MCF 10A (cell line): ENCODE measurements at regions of chr7 and their contacts with region 1.

Region 1: DNA sequence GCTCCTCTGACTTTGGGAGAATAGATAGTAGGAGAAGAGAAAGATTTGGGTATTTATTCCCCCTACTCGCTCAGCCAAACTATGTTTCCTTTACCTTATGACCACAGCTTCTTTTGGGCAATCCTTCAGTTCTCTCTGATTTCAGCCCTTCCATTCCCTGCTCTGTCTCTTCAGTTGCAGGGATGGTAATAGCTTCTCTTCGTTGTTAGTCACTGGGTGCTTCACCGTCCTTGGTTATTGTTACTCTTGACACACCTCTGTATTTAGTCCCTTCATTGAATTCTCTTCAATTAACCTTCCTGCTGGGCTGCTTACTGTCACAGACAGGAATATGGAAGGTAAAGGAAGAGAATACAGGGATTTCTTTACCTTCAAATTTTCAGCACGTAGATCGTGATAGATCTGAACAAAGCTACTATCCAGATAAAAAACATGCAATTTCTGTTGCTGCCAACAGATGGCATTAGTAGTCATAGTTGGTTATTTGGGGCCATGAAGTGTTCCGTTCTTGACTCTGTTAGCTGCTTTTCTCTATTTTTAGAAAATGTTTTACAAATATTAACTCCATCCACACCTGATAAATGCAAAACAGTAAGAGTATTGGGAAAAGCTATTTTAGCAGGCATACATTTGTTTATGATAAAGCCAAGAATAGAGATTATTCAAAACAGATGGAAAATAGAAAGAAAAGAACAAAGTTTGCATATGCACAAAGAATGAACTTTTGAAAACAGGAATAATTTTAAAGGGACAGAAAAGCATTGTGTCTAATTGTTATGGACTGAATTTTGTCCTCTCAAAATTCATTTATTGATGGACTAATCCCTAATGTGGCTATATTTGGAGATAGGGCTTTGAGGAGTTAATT is 14.0 kb upstream of the PTTG1IP2 start:
- DNase-seq: peak; percentile 71
- H3K4me3 Mint-ChIP-seq: peak overlapping the region; percentile 63
- H3K27ac Mint-ChIP-seq: peak overlapping the region; percentile 24
- H3K4me1 Mint-ChIP-seq: peaks cover 8% of the 10 kb centered on the region
- H3K27me3 Mint-ChIP-seq: no peaks in the 10 kb centered on the region
- CTCF ChIP-seq: peak; percentile 62

Region 2: DNA sequence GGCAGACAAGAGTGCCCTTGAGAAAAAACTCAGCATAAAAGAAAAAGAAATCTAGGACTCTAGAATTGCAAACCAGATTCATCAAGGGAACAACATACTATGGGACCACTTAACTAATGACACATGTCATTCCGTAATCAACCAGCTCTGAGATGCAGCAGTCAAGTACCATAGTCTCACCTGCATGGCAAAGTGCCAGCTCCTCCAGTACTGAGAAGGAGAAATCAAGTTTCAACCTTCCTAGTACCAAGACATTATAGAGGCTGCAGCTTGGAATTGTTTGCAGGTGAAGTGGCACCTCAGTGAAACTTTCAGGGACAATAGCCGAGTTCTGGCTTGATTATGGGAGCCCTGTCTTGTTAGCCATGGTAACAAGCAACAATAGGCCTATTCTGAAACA is 289.7 kb before region 1 on chr7:
- CTCF ChIA-PET with region 1: no interaction called
- POLR2A ChIA-PET with region 1: no interaction called
- intact Hi-C with region 1: no loop called
- DNase-seq: no peak
- H3K4me3 Mint-ChIP-seq: no peak overlapping the region
- H3K27ac Mint-ChIP-seq: no peak overlapping the region
- H3K4me1 Mint-ChIP-seq: no peaks in the 10 kb centered on the region
- H3K27me3 Mint-ChIP-seq: no peaks in the 10 kb centered on the region
- CTCF ChIP-seq: no peak

Region 3: GRCh38 chr7:90216080-90216674 is 239.2 kb before region 1 on chr7:
- CTCF ChIA-PET with region 1: no interaction called
- POLR2A ChIA-PET with region 1: no interaction called
- intact Hi-C with region 1: no loop called
- DNase-seq: peak; percentile 77
- H3K4me3 Mint-ChIP-seq: no peak overlapping the region
- H3K27ac Mint-ChIP-seq: no peak overlapping the region
- H3K4me1 Mint-ChIP-seq: peaks cover 4% of the 10 kb centered on the region
- H3K27me3 Mint-ChIP-seq: peaks cover 17% of the 10 kb centered on the region
- CTCF ChIP-seq: no peak

Region 4: DNA sequence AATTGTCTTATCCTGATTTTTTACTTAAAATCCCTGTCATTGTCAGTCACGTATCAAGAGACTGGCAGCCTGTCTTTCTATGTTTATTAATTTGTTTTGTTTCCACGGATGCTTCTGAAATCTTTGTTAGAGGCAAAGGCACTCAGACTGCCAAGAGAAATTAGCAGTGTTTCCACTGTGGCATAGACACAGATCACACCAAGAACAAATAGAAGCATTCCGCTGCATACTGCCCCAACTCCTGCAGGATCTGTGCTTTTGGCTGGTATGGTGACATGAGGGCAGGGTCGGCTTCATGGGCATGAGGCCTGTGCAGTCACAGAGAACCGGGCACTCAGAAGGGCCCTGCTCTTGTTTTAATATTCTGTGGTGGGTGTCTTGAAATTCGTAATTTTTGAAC is 33.7 kb before region 1 on chr7:
- CTCF ChIA-PET with region 1: no interaction called
- POLR2A ChIA-PET with region 1: no interaction called
- intact Hi-C with region 1: no loop called
- DNase-seq: no peak
- H3K4me3 Mint-ChIP-seq: no peak overlapping the region
- H3K27ac Mint-ChIP-seq: no peak overlapping the region
- H3K4me1 Mint-ChIP-seq: peaks cover 7% of the 10 kb centered on the region
- H3K27me3 Mint-ChIP-seq: no peaks in the 10 kb centered on the region
- CTCF ChIP-seq: no peak

Region 5: GRCh38 chr7:90474284-90475210 is 19.1 kb after region 1 on chr7:
- CTCF ChIA-PET with region 1: interaction called, 16 read pairs
- POLR2A ChIA-PET with region 1: interaction called, 4 read pairs
- intact Hi-C with region 1: no loop called
- DNase-seq: peak; percentile 98
- H3K4me3 Mint-ChIP-seq: no peak overlapping the region
- H3K27ac Mint-ChIP-seq: peak overlapping the region; percentile 86
- H3K4me1 Mint-ChIP-seq: peaks cover 33% of the 10 kb centered on the region
- H3K27me3 Mint-ChIP-seq: no peaks in the 10 kb centered on the region
- CTCF ChIP-seq: no peak

Region 6: DNA sequence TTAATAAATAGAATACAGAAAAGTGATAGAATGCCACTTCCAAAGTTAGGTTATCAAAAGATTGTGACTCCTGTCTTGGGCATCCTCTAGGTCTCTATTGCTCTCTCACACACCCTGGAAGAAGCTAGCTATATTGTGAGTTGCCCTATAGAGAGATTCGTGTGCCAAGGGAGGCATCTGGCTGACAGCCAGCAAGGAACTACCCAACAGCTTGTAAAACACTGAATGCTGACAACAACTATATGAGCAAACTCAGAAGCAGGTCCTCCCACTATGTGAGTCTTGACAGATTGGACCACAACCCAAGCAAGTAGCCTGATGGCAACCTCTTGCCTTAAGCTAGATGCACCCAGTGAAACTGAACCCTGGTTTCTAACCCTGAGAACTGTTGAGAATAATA is 85.0 kb after region 1 on chr7:
- CTCF ChIA-PET with region 1: interaction called, 11 read pairs
- POLR2A ChIA-PET with region 1: interaction called, 3 read pairs
- intact Hi-C with region 1: no loop called
- DNase-seq: peak; percentile 20
- H3K4me3 Mint-ChIP-seq: no peak overlapping the region
- H3K27ac Mint-ChIP-seq: no peak overlapping the region
- H3K4me1 Mint-ChIP-seq: no peaks in the 10 kb centered on the region
- H3K27me3 Mint-ChIP-seq: no peaks in the 10 kb centered on the region
- CTCF ChIP-seq: no peak

Region 7: DNA sequence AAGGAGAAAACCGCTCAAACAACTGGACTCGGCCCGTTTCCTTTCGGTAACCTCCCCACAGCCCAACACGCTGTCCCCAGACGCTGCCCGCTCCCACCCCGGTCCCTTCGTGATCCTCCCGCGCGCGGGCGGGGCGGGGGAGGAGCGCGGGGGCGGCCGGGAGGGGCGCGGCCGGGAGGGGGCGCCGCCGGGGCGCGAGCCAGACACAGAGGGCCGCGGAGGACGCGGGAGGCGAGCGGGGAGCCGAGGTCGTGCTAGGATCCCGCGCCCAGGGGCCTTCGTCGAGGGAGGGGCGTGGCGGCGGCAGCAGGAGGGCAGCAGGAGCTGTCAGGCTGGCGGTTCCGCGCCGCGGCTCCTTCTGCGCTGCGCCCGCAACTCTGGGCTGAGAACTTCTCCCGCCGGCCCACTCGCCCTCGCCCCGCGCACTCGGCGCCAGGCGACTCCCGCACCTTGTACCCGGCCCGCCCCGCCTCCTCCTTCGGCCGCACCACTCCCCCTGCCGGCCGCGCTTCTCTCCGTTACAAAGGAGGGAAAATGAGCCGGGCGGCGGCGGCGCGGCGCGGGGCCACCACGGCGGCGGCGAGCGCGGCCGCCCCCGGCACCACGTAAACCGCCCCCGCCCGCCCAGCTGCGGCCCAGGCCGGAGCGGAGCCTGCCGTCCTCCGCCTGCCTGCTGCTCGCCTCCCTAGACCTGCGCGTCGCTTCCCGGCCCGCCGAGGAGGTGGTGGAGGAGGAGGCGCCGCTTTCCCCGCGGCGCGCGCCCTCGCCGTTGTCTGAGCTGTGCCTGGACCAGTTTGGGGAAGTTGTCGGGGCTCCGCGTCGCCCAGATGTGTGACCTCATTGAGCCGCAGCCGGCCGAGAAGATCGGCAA is 140.6 kb after region 1 on chr7 and contains the start of gene CDK14:
- CTCF ChIA-PET with region 1: interaction called, 10 read pairs
- POLR2A ChIA-PET with region 1: interaction called, 3 read pairs
- intact Hi-C with region 1: loop called (anchors 1 kb)
- DNase-seq: peak; percentile 75
- H3K4me3 Mint-ChIP-seq: peak within 1 kb of the TSS; percentile 94
- H3K27ac Mint-ChIP-seq: peak within 1 kb of the TSS; percentile 73
- H3K4me1 Mint-ChIP-seq: peaks cover 57% of the 10 kb centered on the region
- H3K27me3 Mint-ChIP-seq: no peaks in the 10 kb centered on the region
- CTCF ChIP-seq: peak; percentile 50
- total RNA-seq, gene CDK14: 21.2 and 32.0 TPM in 2 replicates

Region 8: DNA sequence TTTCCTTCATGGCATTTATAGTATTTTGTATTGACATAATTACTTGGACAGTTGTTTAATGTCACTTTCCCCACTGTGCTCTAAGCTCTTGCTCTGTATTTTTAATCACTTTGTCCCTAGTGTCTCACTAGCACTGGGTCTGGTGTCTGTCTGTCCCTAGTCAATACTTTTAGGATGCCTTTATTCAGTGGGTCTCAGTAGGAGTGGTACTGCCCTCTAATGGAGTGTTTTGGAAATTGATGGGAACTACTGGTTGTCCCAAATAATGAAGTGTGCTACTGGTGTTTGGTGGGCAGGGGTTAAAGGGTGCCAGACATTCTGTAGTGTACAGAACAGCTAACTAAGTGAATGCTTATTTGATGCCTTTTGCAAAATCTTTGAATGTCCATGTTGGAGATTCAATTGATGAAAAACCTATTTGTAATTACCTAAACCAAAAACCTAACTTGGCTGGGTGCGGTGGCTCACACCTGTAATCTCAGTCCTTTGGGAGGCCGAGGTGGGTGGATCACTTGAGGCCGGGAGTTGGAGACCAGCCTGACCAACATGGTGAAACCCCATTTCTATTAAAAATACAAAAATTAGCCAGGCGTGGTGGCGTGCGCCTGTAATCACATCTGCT is 174.0 kb after region 1 on chr7:
- CTCF ChIA-PET with region 1: interaction called, 19 read pairs
- POLR2A ChIA-PET with region 1: interaction called, 3 read pairs
- intact Hi-C with region 1: loop called (anchors 1 kb)
- DNase-seq: peak; percentile 77
- H3K4me3 Mint-ChIP-seq: no peak overlapping the region
- H3K27ac Mint-ChIP-seq: no peak overlapping the region
- H3K4me1 Mint-ChIP-seq: peaks cover 21% of the 10 kb centered on the region
- H3K27me3 Mint-ChIP-seq: no peaks in the 10 kb centered on the region
- CTCF ChIP-seq: peak; percentile 51